B cell (primary cell): ENCODE measurements at regions of chr13 and their contacts with region 1.

Region 1: DNA sequence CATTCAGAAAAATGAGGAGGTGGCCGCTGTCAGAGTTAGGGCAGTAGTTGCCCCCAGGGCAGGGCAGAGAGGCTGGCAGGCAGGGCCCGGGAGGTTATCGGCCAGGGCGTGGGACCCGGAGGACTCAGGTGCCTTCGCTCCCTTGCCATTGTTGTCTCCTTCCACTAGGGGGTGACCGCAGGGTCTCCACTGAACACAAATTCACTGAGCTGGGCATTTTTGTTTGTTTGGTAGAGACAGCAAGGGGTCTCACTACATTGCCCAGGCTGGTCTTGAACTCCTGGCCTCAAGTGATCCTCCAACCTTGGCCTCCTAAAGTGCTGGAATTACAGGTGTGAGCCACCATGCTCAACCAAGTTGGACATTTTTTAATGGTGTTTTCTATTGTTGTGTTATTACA is 25.1 kb downstream of the CARS2 start:
- DNase-seq: peak; percentile 39
- ATAC-seq: no peak
- H3K4me3 ChIP-seq: no peak overlapping the region
- H3K4me3 Mint-ChIP-seq: no peak overlapping the region
- H3K27ac ChIP-seq: peak overlapping the region in 1 of 2 donors; percentile 6
- H3K27ac Mint-ChIP-seq: peak overlapping the region; percentile 42
- H3K4me1 ChIP-seq: peaks cover 19 to 35% of the 10 kb centered on the region in 2 donors
- H3K4me1 Mint-ChIP-seq: peaks cover 37% of the 10 kb centered on the region
- H3K27me3 ChIP-seq: no peaks in the 10 kb centered on the region
- H3K27me3 Mint-ChIP-seq: no peaks in the 10 kb centered on the region
- CTCF ChIP-seq: peak; percentile 56

Region 2: GRCh38 chr13:110371550-110372465 is 309.0 kb before region 1 on chr13:
- CTCF ChIA-PET with region 1: no interaction called
- POLR2A ChIA-PET with region 1: no interaction called
- intact Hi-C with region 1: no loop called
- DNase-seq: no peak
- ATAC-seq: no peak
- H3K4me3 ChIP-seq: no peak overlapping the region
- H3K4me3 Mint-ChIP-seq: no peak overlapping the region
- H3K27ac ChIP-seq: no peak overlapping the region
- H3K27ac Mint-ChIP-seq: no peak overlapping the region
- H3K4me1 ChIP-seq: no peaks in the 10 kb centered on the region
- H3K4me1 Mint-ChIP-seq: peaks cover 2% of the 10 kb centered on the region
- H3K27me3 ChIP-seq: no peaks in the 10 kb centered on the region
- H3K27me3 Mint-ChIP-seq: peaks cover 29% of the 10 kb centered on the region
- CTCF ChIP-seq: no peak

Region 3: GRCh38 chr13:110561344-110562035 is 119.4 kb before region 1 on chr13 and contains the start of gene RAB20:
- CTCF ChIA-PET with region 1: interaction called, 3 read pairs
- POLR2A ChIA-PET with region 1: interaction called, 6 read pairs
- intact Hi-C with region 1: loop called (anchors 2 kb)
- DNase-seq: peak; percentile 74
- ATAC-seq: peak; percentile 81
- H3K4me3 ChIP-seq: peak within 1 kb of the TSS; percentile 59 to 92 (median 70)
- H3K4me3 Mint-ChIP-seq: peak within 1 kb of the TSS; percentile 91
- H3K27ac ChIP-seq: peak within 1 kb of the TSS; percentile 12 to 51
- H3K27ac Mint-ChIP-seq: peak within 1 kb of the TSS; percentile 79
- H3K4me1 ChIP-seq: peaks cover 13 to 15% of the 10 kb centered on the region in 2 donors
- H3K4me1 Mint-ChIP-seq: peaks cover 34% of the 10 kb centered on the region
- H3K27me3 ChIP-seq: peaks cover 0 to 5% (median 0%) of the 10 kb centered on the region in 4 experiments
- H3K27me3 Mint-ChIP-seq: peaks cover 10% of the 10 kb centered on the region
- CTCF ChIP-seq: no peak
- total RNA-seq, gene RAB20: 4.6 and 5.1 TPM in 2 replicates

Region 4: DNA sequence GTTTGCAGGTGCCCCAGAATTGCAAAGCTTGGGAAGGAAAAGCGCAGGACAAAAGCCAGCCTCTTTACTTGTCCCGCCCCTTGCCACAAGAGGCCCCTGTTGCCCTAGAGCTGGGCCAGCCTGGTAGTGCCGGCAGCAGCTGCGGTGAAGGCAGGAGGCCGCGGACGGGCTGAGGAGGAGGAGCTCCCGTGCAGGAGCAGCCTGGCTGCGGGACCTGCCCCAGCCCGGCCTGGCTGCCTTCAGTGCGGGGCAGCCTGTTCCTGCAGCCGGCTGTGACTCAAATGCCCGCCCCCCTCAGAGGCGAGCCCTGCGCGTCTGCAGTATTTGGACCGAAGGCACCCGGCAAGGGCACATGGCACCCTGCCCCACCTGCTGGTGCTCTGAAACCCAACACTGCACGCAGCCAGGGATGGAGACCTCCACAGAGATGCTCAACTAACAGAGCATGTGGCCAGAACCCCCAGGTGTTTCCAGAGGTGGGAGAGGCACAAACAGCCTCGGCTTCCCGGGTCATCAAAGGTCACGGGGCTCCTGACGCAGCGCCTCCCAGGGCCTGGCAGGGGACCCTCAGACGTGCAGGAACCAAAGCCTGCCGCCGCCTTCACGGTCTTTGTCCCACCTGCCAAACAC is 35.8 kb before region 1 on chr13:
- CTCF ChIA-PET with region 1: interaction called, 40 read pairs
- POLR2A ChIA-PET with region 1: interaction called, 22 read pairs
- intact Hi-C with region 1: loop called (anchors 1 kb)
- DNase-seq: peak; percentile 85
- ATAC-seq: peak; percentile 95
- H3K4me3 ChIP-seq: peak overlapping the region in 2 of 5 experiments; percentile 23 to 39
- H3K4me3 Mint-ChIP-seq: peak overlapping the region; percentile 57
- H3K27ac ChIP-seq: no peak overlapping the region
- H3K27ac Mint-ChIP-seq: peak overlapping the region; percentile 71
- H3K4me1 ChIP-seq: peaks cover 19 to 23% of the 10 kb centered on the region in 2 donors
- H3K4me1 Mint-ChIP-seq: peaks cover 24% of the 10 kb centered on the region
- H3K27me3 ChIP-seq: no peaks in the 10 kb centered on the region
- H3K27me3 Mint-ChIP-seq: no peaks in the 10 kb centered on the region
- CTCF ChIP-seq: peak; percentile 71

Region 5: GRCh38 chr13:110665491-110666254 is 15.2 kb before region 1 on chr13:
- CTCF ChIA-PET with region 1: interaction called, 29 read pairs
- POLR2A ChIA-PET with region 1: interaction called, 17 read pairs
- intact Hi-C with region 1: loop called (anchors 1 kb)
- DNase-seq: peak; percentile 78
- ATAC-seq: peak; percentile 97
- H3K4me3 ChIP-seq: peak overlapping the region in 2 of 5 experiments; percentile 11 to 17
- H3K4me3 Mint-ChIP-seq: peak overlapping the region; percentile 76
- H3K27ac ChIP-seq: peak overlapping the region; percentile 59 to 72
- H3K27ac Mint-ChIP-seq: peak overlapping the region; percentile 96
- H3K4me1 ChIP-seq: peaks cover 46 to 60% of the 10 kb centered on the region in 2 donors
- H3K4me1 Mint-ChIP-seq: peaks cover 58% of the 10 kb centered on the region
- H3K27me3 ChIP-seq: no peaks in the 10 kb centered on the region
- H3K27me3 Mint-ChIP-seq: no peaks in the 10 kb centered on the region
- CTCF ChIP-seq: no peak

Region 6: DNA sequence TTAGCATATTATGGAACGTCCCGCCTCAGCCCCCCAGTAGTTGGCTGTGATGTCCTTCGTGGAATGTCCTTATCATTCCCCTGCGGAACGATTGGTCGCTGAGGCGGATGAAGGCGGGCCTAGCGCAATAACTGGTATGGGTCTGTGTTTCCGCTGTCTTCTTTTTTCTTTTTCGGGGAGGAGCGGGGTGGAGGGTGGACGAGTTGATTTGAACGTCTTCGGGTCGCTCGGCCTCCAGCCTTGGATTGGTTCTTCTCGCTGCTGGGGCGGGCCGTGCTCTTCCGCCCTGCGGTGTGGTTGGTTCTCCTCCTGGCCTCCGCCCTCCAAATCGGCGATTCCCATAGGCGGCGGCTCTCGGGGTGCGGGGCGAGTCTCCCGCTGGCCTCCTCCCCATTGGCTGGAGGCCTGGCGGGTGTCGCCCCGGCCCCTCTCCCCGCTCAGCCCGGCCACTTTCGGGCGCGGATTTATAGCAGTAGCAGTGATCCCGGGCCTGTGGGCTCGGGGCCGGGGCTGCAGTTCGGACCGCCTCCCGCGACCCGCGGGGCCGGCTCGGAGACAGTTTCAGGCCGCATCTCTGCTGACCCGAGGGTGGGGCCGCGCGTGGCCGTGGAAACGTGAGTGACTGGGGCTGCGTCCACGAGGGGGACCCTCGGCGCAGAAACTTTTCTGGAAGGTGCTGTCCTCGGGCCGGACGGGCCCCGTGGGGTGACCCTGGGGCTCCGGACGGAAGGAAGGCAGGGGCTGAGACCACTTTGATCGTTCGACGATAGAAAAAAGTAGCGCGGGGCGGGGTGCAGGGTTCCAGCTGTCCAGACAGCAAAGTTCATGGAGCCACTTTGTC is 34.8 kb after region 1 on chr13:
- CTCF ChIA-PET with region 1: interaction called, 16 read pairs
- POLR2A ChIA-PET with region 1: interaction called, 62 read pairs
- intact Hi-C with region 1: loop called (anchors 1 kb)
- DNase-seq: peak; percentile 99
- ATAC-seq: peak; percentile 56
- H3K4me3 ChIP-seq: peak overlapping the region; percentile 89 to 100 (median 100)
- H3K4me3 Mint-ChIP-seq: peak overlapping the region; percentile 96
- H3K27ac ChIP-seq: peak overlapping the region; percentile 82 to 86
- H3K27ac Mint-ChIP-seq: peak overlapping the region; percentile 96
- H3K4me1 ChIP-seq: peaks cover 28 to 30% of the 10 kb centered on the region in 2 donors
- H3K4me1 Mint-ChIP-seq: peaks cover 35% of the 10 kb centered on the region
- H3K27me3 ChIP-seq: no peaks in the 10 kb centered on the region
- H3K27me3 Mint-ChIP-seq: no peaks in the 10 kb centered on the region
- CTCF ChIP-seq: peak; percentile 30